ENCODE measurements at regions of chr4 and their contacts with region 1.

Region 1: DNA sequence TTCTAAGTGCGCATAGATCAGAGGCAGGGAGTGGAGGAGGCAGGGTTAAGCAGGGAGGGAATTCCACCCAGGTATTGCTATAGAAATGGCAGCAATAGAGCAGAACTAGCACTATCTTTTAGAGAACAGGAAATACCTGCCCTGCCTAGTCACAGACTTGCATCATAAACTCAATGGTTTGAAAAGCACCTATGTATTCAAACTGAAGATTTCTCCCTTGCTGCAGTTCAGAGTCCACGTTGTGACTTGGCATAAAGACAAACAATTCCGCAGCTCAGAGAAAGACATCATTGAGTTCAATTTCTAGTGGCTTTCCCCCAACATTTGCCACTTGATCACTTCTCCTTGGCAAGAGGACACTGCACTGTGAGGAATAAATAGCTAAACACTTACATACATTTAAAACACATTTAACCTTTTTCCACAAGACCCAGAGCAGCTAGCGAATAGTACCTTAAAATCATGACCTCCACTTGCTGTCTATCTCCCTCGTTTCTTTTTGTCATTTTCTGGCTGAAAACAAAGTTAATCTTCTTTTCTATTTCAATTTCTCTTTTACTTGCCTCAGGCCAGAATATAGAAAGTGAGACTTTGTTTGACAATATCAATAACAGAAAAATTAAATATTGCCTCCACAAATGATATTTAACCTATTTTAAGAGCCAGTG is 42.4 kb downstream of the SLC7A11 start:
- DNase-seq: peak; percentile 67
- H3K4me3 Mint-ChIP-seq: peak overlapping the region; percentile 57
- H3K27ac Mint-ChIP-seq: peak overlapping the region; percentile 98
- H3K4me1 Mint-ChIP-seq: peaks cover 49% of the 10 kb centered on the region
- H3K27me3 Mint-ChIP-seq: no peaks in the 10 kb centered on the region
- CTCF ChIP-seq: no peak

Region 2: GRCh38 chr4:138097912-138098600 is 101.6 kb before region 1 on chr4:
- CTCF ChIA-PET with region 1: no interaction called
- intact Hi-C with region 1: no loop called
- DNase-seq: no peak
- H3K4me3 Mint-ChIP-seq: no peak overlapping the region
- H3K27ac Mint-ChIP-seq: no peak overlapping the region
- H3K4me1 Mint-ChIP-seq: peaks cover 2% of the 10 kb centered on the region
- H3K27me3 Mint-ChIP-seq: no peaks in the 10 kb centered on the region
- CTCF ChIP-seq: no peak

Region 3: GRCh38 chr4:138114434-138114833 is 85.3 kb before region 1 on chr4:
- CTCF ChIA-PET with region 1: no interaction called
- intact Hi-C with region 1: no loop called
- DNase-seq: no peak
- H3K4me3 Mint-ChIP-seq: peak overlapping the region; percentile 20
- H3K27ac Mint-ChIP-seq: peak overlapping the region; percentile 90
- H3K4me1 Mint-ChIP-seq: peaks cover 36% of the 10 kb centered on the region
- H3K27me3 Mint-ChIP-seq: no peaks in the 10 kb centered on the region
- CTCF ChIP-seq: no peak

Region 4: GRCh38 chr4:138242076-138242833 is 42.6 kb after region 1 on chr4 and contains the start of gene SLC7A11:
- CTCF ChIA-PET with region 1: no interaction called
- intact Hi-C with region 1: loop called (anchors 2 kb)
- DNase-seq: peak; percentile 79
- H3K4me3 Mint-ChIP-seq: peak within 1 kb of the TSS; percentile 97
- H3K27ac Mint-ChIP-seq: peak within 1 kb of the TSS; percentile 99
- H3K4me1 Mint-ChIP-seq: no peaks in the 10 kb centered on the region
- H3K27me3 Mint-ChIP-seq: no peaks in the 10 kb centered on the region
- CTCF ChIP-seq: no peak
- total RNA-seq, gene SLC7A11: 37.7 and 49.4 TPM in 2 replicates

Region 5: GRCh38 chr4:138494931-138495330 is 295.2 kb after region 1 on chr4:
- CTCF ChIA-PET with region 1: no interaction called
- intact Hi-C with region 1: loop called (anchors 5 kb)
- DNase-seq: peak; percentile 71
- H3K4me3 Mint-ChIP-seq: no peak overlapping the region
- H3K27ac Mint-ChIP-seq: no peak overlapping the region
- H3K4me1 Mint-ChIP-seq: peaks cover 18% of the 10 kb centered on the region
- H3K27me3 Mint-ChIP-seq: no peaks in the 10 kb centered on the region
- CTCF ChIP-seq: peak; percentile 23